ENCODE measurements at regions of chr17 and their contacts with region 1.

Region 1: DNA sequence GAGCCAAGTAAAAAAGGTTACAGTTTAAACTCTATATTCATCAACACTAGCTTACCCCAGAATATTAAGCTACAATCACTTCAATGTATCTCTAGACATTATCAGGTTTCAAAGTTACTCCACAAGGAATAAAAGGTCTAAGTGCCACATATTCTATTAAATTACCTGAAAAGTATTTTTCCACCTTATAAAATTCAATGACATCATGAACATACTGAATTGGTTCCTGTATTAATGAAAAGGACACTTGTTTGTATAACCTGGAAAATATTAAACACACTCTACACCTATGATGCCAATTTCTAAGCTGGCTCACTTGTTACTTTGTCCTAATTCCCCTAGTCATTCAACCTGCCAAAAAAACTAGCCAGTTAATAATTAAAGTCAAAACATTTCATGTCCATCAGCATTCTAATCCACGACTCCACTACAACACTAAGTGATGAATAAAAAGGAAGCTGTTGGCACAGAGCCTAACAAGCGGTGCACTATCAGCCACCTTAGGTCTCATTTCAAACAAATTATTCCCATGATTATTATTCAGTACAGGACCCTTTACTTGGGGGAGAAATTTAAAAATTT is 12.2 kb downstream of the MED13 start:
- DNase-seq: no peak
- ATAC-seq: no peak
- H3K4me3 ChIP-seq: no peak overlapping the region
- H3K27ac ChIP-seq: peak overlapping the region; percentile 5 to 100 (median 66)
- H3K4me1 ChIP-seq: peaks cover 61 to 66% of the 10 kb centered on the region in 2 donors
- H3K27me3 ChIP-seq: no peaks in the 10 kb centered on the region
- CTCF ChIP-seq: no peak
- POLR2A ChIP-seq: no peak

Region 2: DNA sequence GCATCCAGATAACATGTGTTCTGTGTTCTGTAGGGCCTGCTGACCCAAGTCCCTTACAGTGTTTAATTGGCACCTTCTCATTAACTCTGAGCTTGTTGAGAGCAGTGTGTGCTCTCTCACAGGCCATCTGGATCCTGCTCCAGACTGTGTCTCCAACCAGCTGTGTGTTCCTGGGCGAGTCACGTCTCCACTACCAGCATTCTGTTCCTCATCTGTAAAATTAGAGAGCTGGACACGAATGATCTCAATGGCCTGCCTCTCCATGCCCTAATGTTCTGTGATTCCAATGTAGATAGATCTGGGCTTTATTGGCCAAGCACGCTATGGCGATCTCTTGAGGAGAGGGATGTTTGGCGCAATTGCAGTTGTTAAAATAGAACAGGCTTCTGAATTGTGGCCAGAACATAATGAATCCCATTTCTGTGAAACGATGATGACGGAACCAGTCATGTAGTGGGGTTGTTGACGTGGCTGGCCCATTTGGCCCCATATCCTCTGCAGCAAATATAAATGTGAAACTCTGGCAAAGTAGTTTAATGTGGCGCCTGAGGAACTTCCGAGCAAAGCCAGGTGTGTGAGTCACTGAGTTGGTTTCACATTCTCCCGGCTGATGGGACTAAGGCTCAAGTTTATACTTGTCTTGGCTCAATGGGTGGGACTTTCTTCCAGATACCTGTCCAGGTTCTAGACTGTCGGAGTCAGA is 578.5 kb before region 1 on chr17:
- in situ Hi-C with region 1: no loop called
- intact Hi-C with region 1: loop called (anchors 5 kb)
- DNase-seq: no peak
- ATAC-seq: no peak
- H3K4me3 ChIP-seq: no peak overlapping the region
- H3K27ac ChIP-seq: no peak overlapping the region
- H3K4me1 ChIP-seq: no peaks in the 10 kb centered on the region
- H3K27me3 ChIP-seq: peaks cover 0 to 10% (median 5%) of the 10 kb centered on the region in 3 donors
- CTCF ChIP-seq: no peak
- POLR2A ChIP-seq: no peak

Measured in gastrocnemius medialis (tissue), 4 donors.